ENCODE measurements at regions of chr10 and their contacts with region 1.

Region 1: GRCh38 chr10:3785257-3785850 is 345 bp upstream of the KLF6 start:
- ATAC-seq: peak; percentile 58 to 88 (median 82)
- H3K4me3 ChIP-seq: peak overlapping the region; percentile 70 to 90 (median 84)
- H3K27ac ChIP-seq: peak overlapping the region; percentile 99
- H3K4me1 ChIP-seq: peaks cover 27 to 30% of the 10 kb centered on the region in 2 donors

Region 2: GRCh38 chr10:3239066-3239919 is 546.1 kb before region 1 on chr10:
- in situ Hi-C with region 1: loop called in 1 of 9 experiments (anchors 25 kb)
- ATAC-seq: peak; percentile 38 to 98 (median 64)
- H3K4me3 ChIP-seq: no peak overlapping the region
- H3K27ac ChIP-seq: no peak overlapping the region
- H3K4me1 ChIP-seq: peaks cover 27 to 47% of the 10 kb centered on the region in 2 donors

Region 3: DNA sequence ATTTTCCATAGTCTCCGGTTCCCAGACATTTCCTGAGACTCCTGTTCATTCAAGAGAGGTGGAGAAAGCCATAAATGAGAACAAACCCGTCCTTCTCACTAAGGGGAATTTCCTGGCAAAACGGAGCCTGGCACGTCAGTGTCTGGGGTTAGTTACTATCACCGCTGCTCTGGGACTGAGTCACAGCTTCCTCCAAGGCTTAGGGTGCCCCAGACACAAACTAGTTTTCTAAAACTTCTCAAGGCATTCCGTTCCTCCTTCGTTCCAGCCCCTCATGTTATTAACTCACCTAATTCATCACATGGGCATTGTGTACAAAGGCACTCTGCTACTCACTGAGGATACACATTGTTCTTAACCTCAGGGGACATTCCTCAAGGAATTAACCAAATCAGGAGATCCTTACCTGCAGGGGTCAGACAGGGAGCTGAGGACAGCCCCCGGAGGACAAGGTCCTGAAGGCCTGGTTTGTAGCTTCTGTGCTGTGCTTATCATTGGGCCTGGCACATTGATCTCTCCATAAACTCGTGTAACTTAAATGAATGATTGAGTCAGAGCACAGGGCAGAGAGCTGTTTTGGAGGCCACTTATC is 102.6 kb after region 1 on chr10:
- in situ Hi-C with region 1: no loop called
- ATAC-seq: peak in 1 of 8 experiments; percentile 55
- H3K4me3 ChIP-seq: no peak overlapping the region
- H3K27ac ChIP-seq: no peak overlapping the region
- H3K4me1 ChIP-seq: peaks cover 16 to 19% of the 10 kb centered on the region in 2 donors